Right ventricle myocardium inferior (tissue), 1 donor: ENCODE measurements at regions of chr4 and their contacts with region 1.

Region 1: GRCh38 chr4:48634688-48635308 is 144.7 kb downstream of the ZAR1 start:
- DNase-seq: no peak
- ATAC-seq: no peak

Region 2: DNA sequence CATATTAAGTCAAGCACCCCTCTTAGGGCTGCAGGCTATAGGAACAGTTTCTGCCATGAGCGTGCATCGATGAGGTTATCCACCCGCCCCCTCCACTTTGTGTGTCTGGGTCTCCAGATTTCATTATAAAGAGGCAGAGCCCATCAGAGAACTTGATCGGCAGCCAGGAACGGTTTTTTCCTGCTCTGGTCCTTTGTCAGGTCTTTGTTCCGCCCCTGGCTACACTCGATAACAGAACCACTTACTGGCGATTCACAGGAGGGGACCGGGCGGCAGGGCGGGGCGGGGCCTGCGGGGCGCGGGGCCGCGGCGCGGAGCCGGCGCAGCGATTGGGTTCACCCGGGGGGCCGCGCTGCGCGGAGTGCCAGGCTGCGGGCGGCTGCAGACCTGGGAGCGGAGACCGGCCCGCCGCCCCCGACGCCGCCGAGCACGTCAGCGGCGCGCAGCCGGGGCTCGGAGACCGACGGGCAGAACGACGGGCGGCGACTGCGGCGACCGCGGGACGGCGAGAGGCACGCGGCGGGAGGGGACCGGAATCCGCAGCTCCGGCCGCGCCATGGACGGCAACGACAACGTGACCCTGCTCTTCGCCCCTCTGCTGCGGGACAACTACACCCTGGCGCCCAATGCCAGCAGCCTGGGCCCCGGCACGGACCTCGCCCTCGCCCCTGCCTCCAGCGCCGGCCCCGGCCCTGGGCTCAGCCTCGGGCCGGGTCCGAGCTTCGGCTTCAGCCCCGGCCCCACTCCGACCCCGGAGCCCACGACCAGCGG is 151.6 kb before region 1 on chr4 and contains the start of gene SLC10A4:
- intact Hi-C with region 1: no loop called
- DNase-seq: no peak
- ATAC-seq: no peak
- total RNA-seq, gene SLC10A4: not detected

Region 3: DNA sequence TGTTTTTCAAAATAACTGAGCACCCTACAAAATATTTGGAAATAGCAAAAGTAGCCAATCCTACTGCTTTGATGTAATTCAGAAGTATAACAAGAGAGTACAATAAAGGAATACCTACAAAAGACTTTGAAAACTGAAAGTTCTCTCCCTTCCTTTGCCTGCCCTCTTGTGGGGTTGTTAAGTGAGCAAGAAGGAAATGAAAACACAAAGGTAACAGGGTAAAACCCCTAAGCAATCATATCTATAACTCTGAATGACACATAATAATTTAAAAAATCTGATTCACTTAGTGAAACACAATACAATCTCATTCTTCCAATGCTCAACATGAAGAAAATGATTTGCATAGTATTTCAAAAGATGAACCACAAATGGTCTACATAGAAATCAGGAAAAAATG is 47.1 kb after region 1 on chr4:
- intact Hi-C with region 1: loop called (anchors 5 kb)
- DNase-seq: no peak
- ATAC-seq: no peak